Activated CD8-positive, alpha-beta T cell treated with anti-CD3 and anti-CD28 coated beads for 36 hours (primary cell): ENCODE measurements at regions of chr19 and their contacts with region 1.

Region 1: GRCh38 chr19:4815426-4816201 is 15.9 kb downstream of the TICAM1 start:
- DNase-seq: peak; percentile 88
- ATAC-seq: peak; percentile 89
- H3K4me3 Mint-ChIP-seq: peak overlapping the region; percentile 62
- H3K27ac Mint-ChIP-seq: peak overlapping the region; percentile 70
- H3K4me1 Mint-ChIP-seq: peaks cover 12% of the 10 kb centered on the region
- H3K27me3 Mint-ChIP-seq: no peaks in the 10 kb centered on the region
- CTCF ChIP-seq: no peak

Region 2: DNA sequence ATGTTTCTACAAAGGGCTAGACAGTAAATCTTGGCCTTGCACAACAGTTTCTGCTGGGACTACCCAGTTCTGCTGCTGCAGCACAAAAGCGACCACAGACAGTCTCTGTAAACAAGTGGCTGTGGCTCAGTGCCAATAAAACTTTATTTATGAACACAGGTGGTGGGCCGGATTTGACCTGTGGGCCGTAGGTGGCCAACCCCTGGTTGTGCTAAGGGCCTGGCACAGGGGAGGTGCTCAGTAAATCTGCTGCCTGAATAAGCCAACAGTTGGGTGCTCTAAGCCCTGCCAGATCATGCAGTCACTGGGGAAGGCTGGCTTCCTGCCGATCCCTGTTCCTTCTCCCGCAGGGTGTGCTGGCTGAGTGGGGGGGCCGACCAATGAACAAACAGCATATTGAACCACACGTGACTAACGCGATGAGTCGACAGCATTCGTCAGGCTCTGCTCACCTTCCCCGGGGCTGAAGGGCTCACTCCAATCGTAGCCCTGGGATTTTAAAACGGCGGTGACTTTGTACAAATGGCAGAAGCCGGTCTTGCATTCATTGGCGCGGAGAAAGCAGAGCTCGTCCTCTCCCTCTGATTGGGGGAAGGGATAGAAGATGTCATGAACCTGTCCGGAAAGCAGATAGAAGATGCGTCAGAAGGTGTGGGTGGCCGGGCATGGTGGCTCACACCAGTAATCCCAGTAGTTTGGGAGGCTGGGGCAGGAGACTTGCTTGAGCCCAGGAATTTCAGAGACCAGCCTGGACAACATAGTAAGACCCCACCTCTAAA is 121.2 kb before region 1 on chr19:
- CTCF ChIA-PET with region 1: no interaction called
- POLR2A ChIA-PET with region 1: no interaction called
- intact Hi-C with region 1: no loop called
- DNase-seq: no peak
- ATAC-seq: no peak
- H3K4me3 Mint-ChIP-seq: no peak overlapping the region
- H3K27ac Mint-ChIP-seq: no peak overlapping the region
- H3K4me1 Mint-ChIP-seq: no peaks in the 10 kb centered on the region
- H3K27me3 Mint-ChIP-seq: no peaks in the 10 kb centered on the region
- CTCF ChIP-seq: no peak

Region 3: GRCh38 chr19:4732680-4733114 is 82.9 kb before region 1 on chr19:
- CTCF ChIA-PET with region 1: interaction called, 28 read pairs
- POLR2A ChIA-PET with region 1: no interaction called
- intact Hi-C with region 1: no loop called
- DNase-seq: peak; percentile 67
- ATAC-seq: peak; percentile 90
- H3K4me3 Mint-ChIP-seq: peak overlapping the region; percentile 9
- H3K27ac Mint-ChIP-seq: no peak overlapping the region
- H3K4me1 Mint-ChIP-seq: peaks cover 5% of the 10 kb centered on the region
- H3K27me3 Mint-ChIP-seq: no peaks in the 10 kb centered on the region
- CTCF ChIP-seq: peak; percentile 84

Region 4: GRCh38 chr19:4831304-4831978 is 15.8 kb after region 1 on chr19 and contains the start of gene TICAM1:
- CTCF ChIA-PET with region 1: interaction called, 62 read pairs
- POLR2A ChIA-PET with region 1: interaction called, 4 read pairs
- intact Hi-C with region 1: no loop called
- DNase-seq: peak; percentile 77
- ATAC-seq: peak; percentile 84
- H3K4me3 Mint-ChIP-seq: peak within 1 kb of the TSS; percentile 88
- H3K27ac Mint-ChIP-seq: peak within 1 kb of the TSS; percentile 92
- H3K4me1 Mint-ChIP-seq: peaks cover 20% of the 10 kb centered on the region
- H3K27me3 Mint-ChIP-seq: no peaks in the 10 kb centered on the region
- CTCF ChIP-seq: no peak
- total RNA-seq, gene TICAM1: 17.4 to 17.5 TPM

Region 5: GRCh38 chr19:4851551-4852290 is 36.1 kb after region 1 on chr19:
- CTCF ChIA-PET with region 1: interaction called, 310 read pairs
- POLR2A ChIA-PET with region 1: no interaction called
- intact Hi-C with region 1: no loop called
- DNase-seq: peak; percentile 86
- ATAC-seq: peak; percentile 96
- H3K4me3 Mint-ChIP-seq: no peak overlapping the region
- H3K27ac Mint-ChIP-seq: no peak overlapping the region
- H3K4me1 Mint-ChIP-seq: peaks cover 3% of the 10 kb centered on the region
- H3K27me3 Mint-ChIP-seq: no peaks in the 10 kb centered on the region
- CTCF ChIP-seq: peak; percentile 90

Region 6: DNA sequence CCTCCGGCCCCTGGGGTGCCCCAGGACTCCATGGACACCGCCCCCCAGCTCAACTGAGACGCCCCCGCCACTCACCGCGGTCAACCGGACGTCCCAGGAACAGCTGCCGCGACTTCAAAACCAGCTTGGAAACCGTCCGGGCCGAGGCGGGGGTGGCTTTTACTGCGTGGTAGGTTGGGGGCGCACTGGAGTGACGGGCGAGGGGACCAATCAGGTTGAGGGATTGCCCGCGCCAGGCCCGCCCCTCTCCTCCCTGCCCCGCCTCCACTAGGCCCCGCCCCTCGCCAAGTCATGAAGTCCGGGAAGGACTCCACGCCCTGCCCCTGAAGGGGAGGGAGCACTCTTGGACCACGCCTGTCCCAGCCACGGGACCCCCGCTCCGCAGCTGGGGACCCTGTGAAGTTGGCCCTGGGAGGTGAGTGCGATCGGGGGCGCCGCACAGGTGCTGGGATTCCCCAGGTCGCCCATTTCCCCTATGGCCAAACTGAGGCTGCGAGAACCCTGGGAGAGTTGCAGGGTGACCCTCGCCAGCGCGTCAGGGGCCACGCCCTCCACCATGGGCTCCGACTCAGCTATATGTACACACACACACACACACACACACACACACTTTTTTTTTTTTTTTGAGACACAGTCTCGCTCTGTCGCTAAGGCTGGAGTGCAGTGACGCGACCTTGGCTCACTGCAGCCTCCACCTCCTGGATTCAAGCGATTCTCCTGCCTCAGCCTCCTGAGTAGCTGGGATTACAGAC is 52.1 kb after region 1 on chr19 and contains the start of gene PLIN3:
- CTCF ChIA-PET with region 1: interaction called, 52 read pairs
- POLR2A ChIA-PET with region 1: no interaction called
- intact Hi-C with region 1: no loop called
- DNase-seq: peak; percentile 97
- ATAC-seq: peak; percentile 95
- H3K4me3 Mint-ChIP-seq: peak within 1 kb of the TSS; percentile 75
- H3K27ac Mint-ChIP-seq: peak within 1 kb of the TSS; percentile 59
- H3K4me1 Mint-ChIP-seq: peaks cover 15% of the 10 kb centered on the region
- H3K27me3 Mint-ChIP-seq: peaks cover 2% of the 10 kb centered on the region
- CTCF ChIP-seq: no peak
- total RNA-seq, gene PLIN3: 15.5 to 23.5 TPM

Region 7: DNA sequence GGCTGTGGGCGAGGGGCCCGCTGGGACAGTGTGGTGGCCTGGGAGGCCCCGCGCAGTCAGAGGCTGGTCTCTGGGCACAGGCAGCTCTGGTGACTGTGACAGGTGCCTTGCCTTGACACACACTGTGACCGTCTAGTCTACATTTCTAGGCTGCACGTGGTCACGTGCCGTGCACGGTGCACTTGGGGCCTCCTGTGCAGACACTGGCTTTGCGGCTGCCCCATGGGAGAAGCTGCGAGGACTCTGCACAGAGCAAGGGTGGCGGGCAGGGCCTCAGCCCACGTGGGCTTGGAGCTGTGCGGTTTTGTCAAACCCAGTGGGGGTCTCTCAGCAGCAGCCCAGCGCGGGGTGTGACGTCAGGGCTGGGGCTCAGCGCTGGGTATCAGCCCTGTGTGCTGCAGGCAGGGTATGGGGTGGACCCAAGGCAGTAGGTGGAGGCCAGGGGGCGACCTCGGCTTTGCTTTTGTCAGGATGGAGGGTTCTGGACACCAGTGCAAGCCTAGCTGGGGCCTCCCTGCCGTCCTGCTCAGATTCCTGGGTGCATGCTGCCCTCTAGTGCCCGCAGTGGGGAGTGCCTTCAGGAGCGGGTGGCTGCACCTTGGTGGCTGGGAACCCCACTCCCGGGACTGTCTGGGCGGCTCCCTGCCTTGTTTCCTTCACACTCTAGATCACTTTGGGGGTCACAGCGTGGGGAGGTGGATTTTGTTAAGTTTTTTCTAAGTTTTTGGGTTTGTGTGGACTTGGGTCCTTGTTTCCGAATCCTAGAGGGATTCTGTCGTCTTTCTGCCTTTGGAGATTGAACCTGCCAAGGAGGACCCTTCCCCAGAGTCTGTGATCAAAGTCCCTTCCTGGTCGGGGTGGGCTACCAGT is 215.9 kb after region 1 on chr19:
- CTCF ChIA-PET with region 1: interaction called, 43 read pairs
- POLR2A ChIA-PET with region 1: no interaction called
- intact Hi-C with region 1: no loop called
- DNase-seq: peak; percentile 87
- ATAC-seq: peak; percentile 94
- H3K4me3 Mint-ChIP-seq: no peak overlapping the region
- H3K27ac Mint-ChIP-seq: no peak overlapping the region
- H3K4me1 Mint-ChIP-seq: peaks cover 5% of the 10 kb centered on the region
- H3K27me3 Mint-ChIP-seq: no peaks in the 10 kb centered on the region
- CTCF ChIP-seq: peak; percentile 91